ENCODE measurements at regions of chr11 and their contacts with region 1.

Region 1: DNA sequence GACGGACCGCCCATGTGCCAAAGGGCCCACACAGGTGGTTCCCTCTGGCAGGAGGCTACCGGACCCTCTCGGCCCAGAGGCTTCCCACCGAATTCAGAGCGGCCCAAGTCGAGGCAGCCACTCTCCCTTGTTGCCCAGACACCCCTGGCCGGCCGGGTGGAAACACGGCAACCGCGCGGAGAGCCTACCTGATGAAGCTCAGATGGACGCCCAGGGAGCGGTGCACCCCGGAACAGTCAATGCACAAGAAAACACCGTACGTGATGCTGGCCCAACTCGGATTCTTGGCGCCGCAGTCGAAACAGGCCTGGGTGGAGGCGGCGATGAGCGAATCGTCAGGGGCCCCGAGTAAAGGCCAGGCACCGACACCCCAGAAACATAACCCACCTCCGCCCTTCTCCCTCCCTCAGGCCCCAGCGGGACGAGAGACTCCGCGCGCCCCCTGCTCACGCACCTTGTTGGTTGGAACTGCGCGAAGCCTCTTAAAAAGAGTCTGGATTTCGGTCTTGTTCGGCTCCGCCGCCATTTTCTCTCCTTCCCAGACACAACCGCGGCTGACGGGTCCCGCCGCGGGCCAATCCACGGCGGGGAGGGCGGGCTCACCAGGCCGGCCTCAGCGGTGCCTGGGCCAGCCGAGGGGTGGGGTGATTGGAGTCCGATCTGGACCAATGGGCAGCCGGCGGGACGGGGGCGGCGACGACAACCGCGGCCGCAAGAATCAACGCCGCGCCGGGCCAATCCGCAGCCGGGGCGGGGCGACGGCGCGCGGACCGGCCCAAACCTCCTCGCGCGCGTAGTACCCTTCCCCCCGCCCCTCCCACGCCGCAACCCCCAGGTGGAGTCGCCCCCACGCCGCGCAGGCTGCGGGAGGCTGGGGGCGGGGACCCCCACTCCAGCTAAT is at the start of gene ARFGAP2:
- DNase-seq: peak; percentile 98
- ATAC-seq: peak; percentile 90
- H3K4me3 ChIP-seq: peak within 1 kb of the TSS; percentile 78 to 98 (median 96)
- H3K4me3 Mint-ChIP-seq: peak within 1 kb of the TSS; percentile 100
- H3K27ac ChIP-seq: peak within 1 kb of the TSS; percentile 92
- H3K27ac Mint-ChIP-seq: peak within 1 kb of the TSS; percentile 100
- H3K4me1 ChIP-seq: peaks cover 17 to 28% of the 10 kb centered on the region in 2 donors
- H3K4me1 Mint-ChIP-seq: peaks cover 33% of the 10 kb centered on the region
- H3K27me3 ChIP-seq: no peaks in the 10 kb centered on the region
- H3K27me3 Mint-ChIP-seq: no peaks in the 10 kb centered on the region
- CTCF ChIP-seq: no peak
- total RNA-seq, gene ARFGAP2: 200 and 214 TPM in 2 replicates

Region 2: GRCh38 chr11:47121056-47121455 is 55.5 kb before region 1 on chr11:
- CTCF ChIA-PET with region 1: no interaction called
- POLR2A ChIA-PET with region 1: no interaction called
- intact Hi-C with region 1: no loop called
- DNase-seq: no peak
- ATAC-seq: no peak
- H3K4me3 ChIP-seq: no peak overlapping the region
- H3K4me3 Mint-ChIP-seq: no peak overlapping the region
- H3K27ac ChIP-seq: no peak overlapping the region
- H3K27ac Mint-ChIP-seq: no peak overlapping the region
- H3K4me1 ChIP-seq: no peaks in the 10 kb centered on the region
- H3K4me1 Mint-ChIP-seq: no peaks in the 10 kb centered on the region
- H3K27me3 ChIP-seq: no peaks in the 10 kb centered on the region
- H3K27me3 Mint-ChIP-seq: no peaks in the 10 kb centered on the region
- CTCF ChIP-seq: no peak

Region 3: GRCh38 chr11:47213985-47214564 is 37.5 kb after region 1 on chr11:
- CTCF ChIA-PET with region 1: interaction called, 37 read pairs
- POLR2A ChIA-PET with region 1: interaction called, 14 read pairs
- intact Hi-C with region 1: loop called (anchors 1 kb)
- DNase-seq: peak; percentile 88
- ATAC-seq: peak; percentile 79
- H3K4me3 ChIP-seq: peak overlapping the region; percentile 71 to 92 (median 76)
- H3K4me3 Mint-ChIP-seq: peak overlapping the region; percentile 98
- H3K27ac ChIP-seq: peak overlapping the region; percentile 89
- H3K27ac Mint-ChIP-seq: peak overlapping the region; percentile 98
- H3K4me1 ChIP-seq: peaks cover 14 to 31% of the 10 kb centered on the region in 2 donors
- H3K4me1 Mint-ChIP-seq: peaks cover 30% of the 10 kb centered on the region
- H3K27me3 ChIP-seq: no peaks in the 10 kb centered on the region
- H3K27me3 Mint-ChIP-seq: no peaks in the 10 kb centered on the region
- CTCF ChIP-seq: no peak

Region 4: DNA sequence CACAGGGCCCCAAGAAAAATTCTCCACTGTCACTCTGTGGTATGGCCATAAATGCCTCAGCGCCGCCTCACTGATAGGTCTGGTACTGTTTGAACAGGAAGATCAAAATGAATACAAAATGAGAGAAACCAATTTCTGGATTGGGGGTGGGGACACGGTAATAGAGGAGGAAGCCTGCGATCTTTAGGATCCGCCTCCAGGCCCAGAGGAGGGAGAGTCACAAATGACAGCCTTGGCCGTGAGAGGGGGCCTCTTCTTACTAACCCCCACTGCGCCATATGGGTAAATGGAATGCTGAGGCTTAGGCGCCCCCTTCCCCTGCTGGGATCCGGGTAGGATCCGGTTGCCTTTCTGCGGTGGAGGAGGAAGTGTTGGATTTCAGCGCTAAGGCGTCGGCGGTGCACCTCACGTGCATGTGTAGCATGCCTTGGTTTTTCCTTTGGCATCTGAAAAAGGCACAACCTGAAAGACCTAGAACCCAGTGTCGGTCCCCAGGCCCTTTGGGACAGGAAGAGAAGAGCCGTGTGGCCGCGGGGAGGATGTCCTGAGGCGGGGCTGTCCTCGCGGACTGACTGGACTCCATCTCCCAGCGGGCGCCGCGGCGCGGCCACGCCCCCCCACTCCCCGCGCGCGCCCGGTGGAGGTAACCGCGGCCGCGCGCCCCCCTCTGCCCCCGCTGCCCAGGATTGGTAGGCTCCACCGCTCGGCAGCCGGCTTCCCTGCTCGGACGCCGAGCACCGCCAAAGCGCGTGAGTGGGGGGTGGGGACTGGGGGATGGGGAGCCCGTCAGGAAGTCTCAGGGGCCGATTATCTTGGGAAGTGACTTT is 92.6 kb after region 1 on chr11:
- CTCF ChIA-PET with region 1: interaction called, 7 read pairs
- POLR2A ChIA-PET with region 1: interaction called, 4 read pairs
- intact Hi-C with region 1: loop called (anchors 1 kb)
- DNase-seq: peak; percentile 92
- ATAC-seq: peak; percentile 67
- H3K4me3 ChIP-seq: peak overlapping the region; percentile 58 to 89 (median 84)
- H3K4me3 Mint-ChIP-seq: peak overlapping the region; percentile 89
- H3K27ac ChIP-seq: peak overlapping the region; percentile 90 to 92
- H3K27ac Mint-ChIP-seq: peak overlapping the region; percentile 94
- H3K4me1 ChIP-seq: peaks cover 47 to 48% of the 10 kb centered on the region in 2 donors
- H3K4me1 Mint-ChIP-seq: peaks cover 55% of the 10 kb centered on the region
- H3K27me3 ChIP-seq: no peaks in the 10 kb centered on the region
- H3K27me3 Mint-ChIP-seq: no peaks in the 10 kb centered on the region
- CTCF ChIP-seq: no peak

Region 5: GRCh38 chr11:47407746-47408590 is 231.4 kb after region 1 on chr11 and contains the start of gene SLC39A13:
- CTCF ChIA-PET with region 1: interaction called, 22 read pairs
- POLR2A ChIA-PET with region 1: no interaction called
- intact Hi-C with region 1: loop called (anchors 1 kb)
- DNase-seq: peak; percentile 98
- ATAC-seq: peak; percentile 81
- H3K4me3 ChIP-seq: peak within 1 kb of the TSS; percentile 60 to 94 (median 66)
- H3K4me3 Mint-ChIP-seq: peak within 1 kb of the TSS; percentile 92
- H3K27ac ChIP-seq: peak within 1 kb of the TSS; percentile 85 to 91
- H3K27ac Mint-ChIP-seq: peak within 1 kb of the TSS; percentile 95
- H3K4me1 ChIP-seq: peaks cover 16 to 25% of the 10 kb centered on the region in 2 donors
- H3K4me1 Mint-ChIP-seq: peaks cover 27% of the 10 kb centered on the region
- H3K27me3 ChIP-seq: no peaks in the 10 kb centered on the region
- H3K27me3 Mint-ChIP-seq: no peaks in the 10 kb centered on the region
- CTCF ChIP-seq: peak; percentile 92
- total RNA-seq, gene SLC39A13: 33.0 and 39.4 TPM in 2 replicates

Region 6: DNA sequence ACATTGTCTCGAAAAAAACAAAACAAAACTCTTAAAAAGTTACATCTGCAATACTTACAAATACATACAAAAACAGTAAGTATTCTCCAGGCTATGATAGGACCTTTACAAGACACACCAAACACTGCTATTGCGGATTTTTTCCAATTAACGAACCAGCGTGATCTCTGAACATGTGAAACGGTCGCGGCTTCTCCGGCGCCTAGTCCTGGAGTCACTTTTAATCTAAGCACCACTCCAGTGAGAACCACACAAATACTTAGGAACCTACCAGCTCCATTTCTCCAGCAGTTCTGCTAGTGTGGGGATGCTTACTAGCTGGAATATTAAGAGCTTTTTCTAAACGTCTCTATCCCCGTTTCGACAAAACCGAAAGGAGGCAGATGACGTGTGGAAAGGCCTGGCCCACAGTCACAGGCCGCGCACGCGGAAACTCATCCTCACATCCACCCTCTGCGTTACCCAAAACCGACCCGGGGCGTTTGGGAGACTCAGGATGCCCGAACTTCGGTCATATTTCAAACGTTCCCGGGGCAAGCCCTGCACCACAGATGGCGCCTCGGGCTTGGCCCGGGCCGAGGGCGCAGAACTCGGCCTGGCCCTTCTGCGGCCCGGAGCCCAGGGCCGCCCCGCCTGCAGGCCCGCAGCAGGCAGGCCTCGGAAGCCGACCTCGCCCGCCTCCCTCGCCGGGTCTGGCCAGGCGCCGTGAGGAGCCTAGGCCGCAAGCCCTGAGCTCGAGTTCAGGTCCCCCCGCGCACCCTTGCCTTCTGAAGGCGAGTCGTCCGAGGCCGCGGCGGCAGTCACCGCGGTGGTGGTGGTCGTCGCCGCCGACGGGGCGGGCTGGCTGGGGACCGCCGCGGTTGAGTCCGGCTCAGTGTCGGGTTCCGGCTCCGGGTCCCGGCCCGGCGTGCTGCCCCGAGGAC is 590.0 kb after region 1 on chr11:
- CTCF ChIA-PET with region 1: no interaction called
- POLR2A ChIA-PET with region 1: no interaction called
- intact Hi-C with region 1: loop called (anchors 2 kb)
- DNase-seq: peak; percentile 88
- ATAC-seq: peak; percentile 15
- H3K4me3 ChIP-seq: peak overlapping the region; percentile 49 to 88 (median 78)
- H3K4me3 Mint-ChIP-seq: peak overlapping the region; percentile 97
- H3K27ac ChIP-seq: peak overlapping the region; percentile 91 to 97
- H3K27ac Mint-ChIP-seq: peak overlapping the region; percentile 100
- H3K4me1 ChIP-seq: peaks cover 19 to 24% of the 10 kb centered on the region in 2 donors
- H3K4me1 Mint-ChIP-seq: peaks cover 26% of the 10 kb centered on the region
- H3K27me3 ChIP-seq: no peaks in the 10 kb centered on the region
- H3K27me3 Mint-ChIP-seq: no peaks in the 10 kb centered on the region
- CTCF ChIP-seq: no peak

Measured in B cell (primary cell).